ENCODE measurements at regions of chr10 and their contacts with region 1.

Region 1: DNA sequence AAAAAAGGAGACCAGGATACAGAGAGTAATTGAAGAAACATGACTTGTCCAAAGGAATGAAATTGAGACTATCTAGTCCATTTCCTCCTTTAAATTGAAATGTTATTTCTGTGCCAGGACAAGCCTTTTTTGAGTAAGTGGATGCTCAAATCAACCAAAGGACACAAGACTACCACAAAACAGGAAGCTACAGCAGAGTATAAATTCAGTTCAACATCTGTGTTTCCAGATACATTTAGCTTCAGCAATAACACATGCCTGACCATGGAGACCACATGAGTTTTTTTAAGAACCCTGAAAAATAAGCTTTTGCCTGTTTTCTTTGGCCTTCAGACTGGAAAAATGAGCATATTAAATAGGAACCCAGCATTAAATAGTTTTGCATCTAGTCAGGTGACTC is 707.5 kb downstream of the ZWINT start:
- DNase-seq: no peak
- ATAC-seq: no peak
- H3K4me3 Mint-ChIP-seq: no peak overlapping the region
- H3K27ac Mint-ChIP-seq: no peak overlapping the region
- H3K4me1 Mint-ChIP-seq: no peaks in the 10 kb centered on the region
- H3K27me3 Mint-ChIP-seq: no peaks in the 10 kb centered on the region
- CTCF ChIP-seq: no peak

Region 2: DNA sequence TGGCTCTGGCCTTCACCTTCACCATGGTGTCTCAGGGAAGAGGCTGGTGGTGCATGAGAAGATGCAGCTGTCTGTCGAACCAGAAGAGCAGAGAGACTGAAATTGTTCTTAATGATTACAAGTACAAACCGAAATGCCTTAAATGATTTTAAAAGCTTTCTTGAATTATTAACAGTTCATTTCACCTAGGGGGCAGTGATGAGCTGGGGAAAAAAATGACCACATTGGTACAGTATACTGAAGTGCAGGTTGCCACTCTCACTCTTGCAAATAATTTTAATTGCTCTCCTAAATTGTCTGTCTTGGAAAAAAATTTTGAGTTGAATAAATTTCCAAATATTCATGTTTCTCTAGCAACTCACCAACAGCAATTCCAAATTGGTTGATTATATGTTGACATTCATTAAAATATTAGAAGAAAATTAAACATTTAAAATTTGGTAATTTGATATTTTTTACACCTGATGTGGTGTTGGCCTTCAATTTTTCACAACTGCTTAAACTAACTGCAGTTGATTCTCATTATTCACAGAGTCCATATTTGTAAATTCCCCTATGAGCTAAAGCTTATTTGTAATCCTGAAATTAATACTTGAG is 14.9 kb after region 1 on chr10:
- CTCF ChIA-PET with region 1: interaction called, 13 read pairs
- POLR2A ChIA-PET with region 1: no interaction called
- DNase-seq: peak; percentile 21
- ATAC-seq: peak; percentile 72
- H3K4me3 Mint-ChIP-seq: no peak overlapping the region
- H3K27ac Mint-ChIP-seq: no peak overlapping the region
- H3K4me1 Mint-ChIP-seq: no peaks in the 10 kb centered on the region
- H3K27me3 Mint-ChIP-seq: no peaks in the 10 kb centered on the region
- CTCF ChIP-seq: peak; percentile 46

Region 3: GRCh38 chr10:55750458-55750857 is 96.9 kb after region 1 on chr10:
- CTCF ChIA-PET with region 1: no interaction called
- POLR2A ChIA-PET with region 1: no interaction called
- DNase-seq: no peak
- ATAC-seq: no peak
- H3K4me3 Mint-ChIP-seq: no peak overlapping the region
- H3K27ac Mint-ChIP-seq: no peak overlapping the region
- H3K4me1 Mint-ChIP-seq: peaks cover 10% of the 10 kb centered on the region
- H3K27me3 Mint-ChIP-seq: no peaks in the 10 kb centered on the region
- CTCF ChIP-seq: no peak

Measured in WTC11 (cell line).